ENCODE measurements at regions of chr4 and their contacts with region 1.

Region 1: DNA sequence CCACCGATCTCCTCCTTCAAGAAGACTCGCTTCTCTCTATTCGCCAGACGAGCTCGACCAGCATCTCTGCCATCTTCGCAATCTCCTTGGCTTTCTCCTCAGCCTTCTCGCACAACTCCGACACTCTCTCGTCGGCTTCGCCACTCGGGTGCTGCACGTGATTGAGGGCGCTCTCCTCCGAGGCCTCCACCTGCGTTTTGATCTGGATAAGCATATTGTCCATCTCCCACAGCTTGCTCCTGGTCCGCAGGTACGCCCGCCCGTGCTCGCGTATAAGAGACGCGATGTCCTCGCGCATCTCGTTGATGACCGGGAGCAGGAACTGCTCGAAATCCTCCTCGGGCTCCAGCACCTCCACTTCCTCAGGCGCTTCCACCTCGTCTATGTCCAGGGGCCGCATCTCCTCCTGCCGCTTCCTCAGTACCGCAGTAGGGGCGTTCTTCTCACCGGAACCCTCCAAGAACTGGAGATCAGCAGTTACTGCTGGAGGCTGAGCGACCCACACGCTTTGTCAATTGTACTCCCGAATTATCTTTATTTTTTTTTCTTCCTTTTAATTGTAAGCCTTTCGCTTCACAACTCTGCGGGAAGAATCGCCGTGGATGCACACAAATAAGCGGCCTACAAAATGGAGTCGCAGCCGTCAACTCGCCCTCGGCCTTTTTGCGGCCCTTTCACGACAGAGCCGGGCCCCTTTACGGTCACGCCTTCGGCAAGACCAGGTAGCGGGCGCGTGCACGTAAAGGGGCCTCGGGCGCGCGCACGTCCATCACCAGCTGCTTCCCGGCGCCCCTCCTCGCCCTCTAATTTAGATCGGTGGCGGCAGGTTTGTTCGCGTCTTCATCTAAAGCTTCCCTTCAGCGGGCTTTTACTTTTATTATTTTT is at the start of gene MRFAP1L1:
- DNase-seq: peak; percentile 99
- H3K4me3 ChIP-seq: peak within 1 kb of the TSS; percentile 81
- H3K27ac ChIP-seq: peak within 1 kb of the TSS; percentile 68
- H3K4me1 ChIP-seq: peaks cover 13% of the 10 kb centered on the region
- H3K27me3 ChIP-seq: no peaks in the 10 kb centered on the region
- total RNA-seq, gene MRFAP1L1: 44.1 and 62.6 TPM in 2 replicates

Region 2: GRCh38 chr4:6855692-6856297 is 146.3 kb after region 1 on chr4:
- in situ Hi-C with region 1: no loop called
- DNase-seq: peak; percentile 73
- H3K4me3 ChIP-seq: no peak overlapping the region
- H3K27ac ChIP-seq: peak overlapping the region; percentile 47
- H3K4me1 ChIP-seq: peaks cover 23% of the 10 kb centered on the region
- H3K27me3 ChIP-seq: no peaks in the 10 kb centered on the region

Region 3: GRCh38 chr4:7070729-7071511 is 361.4 kb after region 1 on chr4:
- in situ Hi-C with region 1: loop called (anchors 10 kb)
- DNase-seq: peak; percentile 80
- H3K4me3 ChIP-seq: no peak overlapping the region
- H3K27ac ChIP-seq: no peak overlapping the region
- H3K4me1 ChIP-seq: peaks cover 10% of the 10 kb centered on the region
- H3K27me3 ChIP-seq: no peaks in the 10 kb centered on the region

Measured in GM23248 (cell line).